Activated CD4-positive, alpha-beta T cell treated with anti-CD3 and anti-CD28 coated beads, Interleukin-2, amount 10 ng/mL, durations not matched to agents 24 days and 14 days (primary cell): ENCODE measurements at regions of chr5 and their contacts with region 1.

Region 1: GRCh38 chr5:171409164-171410136 is 10.0 kb upstream of the FGF18 start:
- DNase-seq: no peak
- H3K4me3 Mint-ChIP-seq: no peak overlapping the region
- H3K27ac Mint-ChIP-seq: peak overlapping the region; percentile 41
- H3K4me1 Mint-ChIP-seq: peaks cover 35% of the 10 kb centered on the region
- H3K27me3 Mint-ChIP-seq: no peaks in the 10 kb centered on the region

Region 2: DNA sequence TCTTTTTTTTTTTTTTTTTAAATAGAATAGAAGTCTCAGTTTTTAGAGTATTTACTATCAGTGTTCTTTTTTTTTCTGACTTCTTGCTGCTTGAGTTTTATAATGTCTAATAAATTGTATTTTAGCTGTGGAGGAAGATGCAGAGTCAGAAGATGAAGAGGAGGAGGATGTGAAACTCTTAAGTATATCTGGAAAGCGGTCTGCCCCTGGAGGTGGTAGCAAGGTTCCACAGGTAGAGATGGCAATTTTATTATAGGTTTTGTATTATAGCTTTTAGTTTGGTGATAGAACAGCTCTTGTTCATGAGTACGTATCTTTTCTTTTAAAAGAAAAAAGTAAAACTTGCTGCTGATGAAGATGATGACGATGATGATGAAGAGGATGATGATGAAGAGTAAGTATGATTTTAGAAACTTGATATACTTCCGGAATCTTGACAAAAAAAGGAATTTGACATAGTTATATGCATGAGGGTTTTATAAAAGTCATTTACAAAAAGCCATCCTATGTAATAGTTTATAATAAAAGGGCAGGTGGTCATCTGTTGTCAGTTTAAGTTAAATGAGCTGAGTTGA is 16.8 kb before region 1 on chr5:
- intact Hi-C with region 1: loop called (anchors 2 kb)
- DNase-seq: no peak
- H3K4me3 Mint-ChIP-seq: peak overlapping the region; percentile 64
- H3K27ac Mint-ChIP-seq: peak overlapping the region; percentile 60
- H3K4me1 Mint-ChIP-seq: peaks cover 47% of the 10 kb centered on the region
- H3K27me3 Mint-ChIP-seq: peaks cover 3% of the 10 kb centered on the region